Dorsolateral prefrontal cortex (tissue), 120 donors: ENCODE measurements at regions of chr7 and their contacts with region 1.

Region 1: GRCh38 chr7:51366930-51367613 is 50.5 kb upstream of the COBL start:
- DNase-seq: peak in 7 of 10 donors; percentile 41 to 66 (median 56)
- H3K4me3 ChIP-seq: no peak overlapping the region
- H3K27ac ChIP-seq: peak overlapping the region in 5 of 59 donors; percentile 2 to 39 (median 16)
- H3K27me3 ChIP-seq: no peaks in the 10 kb centered on the region
- CTCF ChIP-seq: peak; percentile 63 to 93 (median 84)

Region 2: GRCh38 chr7:50212666-50213621 is 1154.1 kb before region 1 on chr7:
- intact Hi-C with region 1: loop called in 1 of 2 experiments (anchors 10 kb)
- DNase-seq: no peak
- H3K4me3 ChIP-seq: no peak overlapping the region
- H3K27ac ChIP-seq: no peak overlapping the region
- H3K27me3 ChIP-seq: peaks cover 0 to 7% (median 0%) of the 10 kb centered on the region in 45 donors
- CTCF ChIP-seq: no peak

Region 3: DNA sequence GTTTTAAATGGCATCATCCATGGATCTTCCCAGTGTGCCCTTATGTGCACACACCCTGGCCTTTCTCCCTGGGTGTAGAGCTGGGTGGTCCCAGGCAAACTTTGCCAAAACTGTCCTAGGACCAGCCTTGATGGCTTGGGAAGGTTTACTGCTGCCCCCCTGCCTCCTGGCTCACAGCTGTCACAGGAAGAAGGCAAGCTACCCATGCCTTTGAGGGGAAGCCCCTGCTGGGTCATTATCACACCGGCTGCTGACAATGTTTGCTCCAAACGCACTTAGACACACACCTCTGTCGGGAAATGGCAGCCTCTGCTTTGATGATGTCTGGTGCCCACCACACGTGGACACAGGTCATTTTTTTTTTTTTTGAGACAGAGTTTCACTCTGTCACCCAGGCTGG is 891.7 kb before region 1 on chr7:
- intact Hi-C with region 1: loop called in 1 of 2 experiments (anchors 10 kb)
- DNase-seq: no peak
- H3K4me3 ChIP-seq: no peak overlapping the region
- H3K27ac ChIP-seq: no peak overlapping the region
- H3K27me3 ChIP-seq: peaks cover 0 to 5% (median 0%) of the 10 kb centered on the region in 45 donors
- CTCF ChIP-seq: no peak

Region 4: GRCh38 chr7:50793115-50793946 is 573.7 kb before region 1 on chr7:
- intact Hi-C with region 1: loop called in 1 of 2 experiments (anchors 10 kb)
- DNase-seq: peak in 2 of 10 donors; percentile 28 to 46
- H3K4me3 ChIP-seq: peak overlapping the region in 58 of 59 donors; percentile 7 to 73 (median 52)
- H3K27ac ChIP-seq: peak overlapping the region in 21 of 59 donors; percentile 13 to 72 (median 42)
- H3K27me3 ChIP-seq: peaks cover 0 to 48% (median 20%) of the 10 kb centered on the region in 45 donors
- CTCF ChIP-seq: no peak

Region 5: DNA sequence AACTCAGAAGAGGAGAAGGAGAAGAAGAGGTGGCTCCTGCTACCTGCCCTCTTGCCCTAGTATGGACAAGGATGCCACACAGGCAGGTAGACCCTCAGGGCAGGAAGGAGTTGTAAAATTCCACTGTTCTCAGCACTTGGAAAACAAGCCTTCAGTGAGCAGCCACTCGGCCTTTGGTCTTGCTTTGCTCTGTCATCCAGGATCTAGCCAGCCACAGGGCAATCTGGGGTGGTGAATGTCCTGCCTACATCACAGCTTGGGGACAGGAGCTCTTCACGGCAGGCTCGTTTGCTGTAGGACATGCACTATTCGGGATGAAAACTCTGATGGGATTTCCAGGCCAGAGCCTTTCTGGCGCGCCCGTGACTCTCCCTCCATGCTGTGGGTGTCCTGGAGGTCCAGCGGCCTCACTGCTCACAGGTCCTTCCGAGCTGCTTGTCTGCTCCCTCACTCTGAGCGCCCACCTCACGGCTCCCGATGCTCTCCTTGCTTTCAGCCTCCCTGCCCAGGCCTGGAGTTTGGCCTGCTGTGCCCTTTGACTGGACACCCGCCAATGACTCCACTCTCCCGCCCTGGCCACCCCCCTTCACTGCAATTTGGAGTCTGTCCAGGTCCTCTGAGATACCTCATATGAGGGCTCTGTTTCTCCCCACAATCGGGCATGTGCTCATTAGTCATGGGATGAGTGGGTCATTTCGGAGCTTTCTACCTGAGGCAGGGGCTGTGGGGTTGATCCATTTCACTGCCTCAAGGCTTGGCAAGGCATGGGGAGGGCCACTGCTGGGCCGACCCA is 357.2 kb before region 1 on chr7:
- intact Hi-C with region 1: no loop called
- DNase-seq: no peak
- H3K4me3 ChIP-seq: no peak overlapping the region
- H3K27ac ChIP-seq: no peak overlapping the region
- H3K27me3 ChIP-seq: no peaks in the 10 kb centered on the region
- CTCF ChIP-seq: no peak

Region 6: DNA sequence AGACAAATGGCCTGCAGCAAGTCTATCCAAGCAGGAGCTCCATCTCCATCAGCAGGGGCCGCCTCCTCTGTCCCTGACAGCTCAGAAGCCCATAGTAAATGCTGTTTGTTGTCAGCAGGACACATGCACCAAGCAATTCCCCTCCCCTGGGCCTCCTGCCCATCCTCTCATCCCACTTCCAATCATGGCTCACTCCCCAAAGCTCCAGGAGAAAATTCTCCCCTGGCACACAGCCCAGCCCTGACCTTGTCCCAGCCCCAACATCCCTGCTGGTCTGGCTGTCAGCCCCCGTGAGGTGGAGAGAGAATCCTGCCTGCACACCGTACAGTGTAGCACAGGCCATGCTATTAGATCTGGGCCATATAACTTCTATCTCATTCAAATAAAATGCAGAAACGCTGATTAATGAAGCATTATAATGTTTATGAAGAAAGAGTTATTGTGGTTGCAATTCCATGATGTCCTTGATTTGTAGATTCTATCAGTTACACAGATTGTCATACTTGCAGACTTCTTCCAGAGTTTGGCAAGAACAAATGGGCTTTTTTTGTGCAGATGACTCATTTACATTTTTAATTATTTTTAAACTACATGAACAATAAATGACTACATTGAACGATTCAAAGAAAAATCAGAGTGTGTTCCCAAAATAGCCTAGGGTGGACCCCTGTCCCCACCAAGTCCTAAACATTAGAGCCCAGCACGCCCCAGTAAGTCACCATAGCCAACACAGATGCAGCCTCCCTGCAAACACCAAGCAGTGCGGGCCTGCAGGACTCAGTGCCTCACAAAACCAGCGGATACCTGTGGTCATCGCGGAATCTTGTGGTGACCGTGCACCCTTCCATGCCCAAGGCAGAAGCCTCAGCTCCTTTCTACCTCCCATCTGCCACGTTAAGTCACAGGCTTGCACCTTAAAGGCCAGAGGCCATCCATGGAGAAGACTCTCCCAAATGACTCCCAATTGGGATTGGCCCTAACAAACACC is 120.5 kb before region 1 on chr7:
- intact Hi-C with region 1: loop called in 1 of 2 experiments (anchors 10 kb)
- DNase-seq: peak; percentile 57 to 96 (median 76)
- H3K4me3 ChIP-seq: peak overlapping the region in 3 of 59 donors; percentile 8 to 16 (median 8)
- H3K27ac ChIP-seq: peak overlapping the region; percentile 21 to 99 (median 89)
- H3K27me3 ChIP-seq: no peaks in the 10 kb centered on the region
- CTCF ChIP-seq: peak in 29 of 56 donors; percentile 4 to 48 (median 23)

Region 7: GRCh38 chr7:51261950-51262792 is 104.9 kb before region 1 on chr7:
- intact Hi-C with region 1: no loop called
- DNase-seq: peak in 1 of 10 donors; percentile 39
- H3K4me3 ChIP-seq: peak overlapping the region in 3 of 59 donors; percentile 0 to 12 (median 8)
- H3K27ac ChIP-seq: peak overlapping the region in 58 of 59 donors; percentile 31 to 100 (median 81)
- H3K27me3 ChIP-seq: no peaks in the 10 kb centered on the region
- CTCF ChIP-seq: no peak

Region 8: GRCh38 chr7:52197221-52197620 is 830.1 kb after region 1 on chr7:
- intact Hi-C with region 1: no loop called
- DNase-seq: no peak
- H3K4me3 ChIP-seq: no peak overlapping the region
- H3K27ac ChIP-seq: no peak overlapping the region
- H3K27me3 ChIP-seq: no peaks in the 10 kb centered on the region
- CTCF ChIP-seq: no peak

Region 9: DNA sequence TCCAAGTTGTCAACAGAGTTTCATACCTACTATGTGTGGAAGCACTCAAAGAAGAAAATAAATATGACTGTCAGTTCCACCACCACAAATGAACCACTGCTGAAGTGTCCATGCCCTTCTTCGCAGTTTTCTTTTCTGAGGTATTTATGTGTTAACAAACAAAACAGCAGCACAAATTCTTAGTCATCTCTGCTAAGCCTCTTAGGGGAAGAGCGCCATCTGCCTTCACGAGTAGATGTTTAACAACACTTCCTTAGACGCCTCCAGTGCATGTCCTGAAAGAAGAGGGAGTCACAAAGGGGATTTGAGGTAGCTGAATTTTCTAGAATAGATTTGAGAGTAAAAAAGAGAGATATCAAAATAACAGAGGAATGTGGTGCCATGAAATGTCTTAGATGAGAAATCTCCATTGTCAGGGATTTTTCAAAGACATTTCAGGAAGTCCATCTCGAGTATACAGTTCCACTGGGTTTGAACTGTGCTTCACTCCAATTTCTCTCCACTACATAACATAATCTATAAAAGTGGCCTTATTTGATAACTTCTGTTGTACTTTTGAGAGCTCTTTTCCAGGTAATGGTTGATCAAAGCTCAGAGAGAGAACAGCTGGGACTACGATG is 893.1 kb after region 1 on chr7:
- intact Hi-C with region 1: no loop called
- DNase-seq: no peak
- H3K4me3 ChIP-seq: no peak overlapping the region
- H3K27ac ChIP-seq: no peak overlapping the region
- H3K27me3 ChIP-seq: no peaks in the 10 kb centered on the region
- CTCF ChIP-seq: peak in 7 of 56 donors; percentile 12 to 33 (median 21)